GM12878 (cell line): ENCODE measurements at regions of chr1 and their contacts with region 1.

Region 1: DNA sequence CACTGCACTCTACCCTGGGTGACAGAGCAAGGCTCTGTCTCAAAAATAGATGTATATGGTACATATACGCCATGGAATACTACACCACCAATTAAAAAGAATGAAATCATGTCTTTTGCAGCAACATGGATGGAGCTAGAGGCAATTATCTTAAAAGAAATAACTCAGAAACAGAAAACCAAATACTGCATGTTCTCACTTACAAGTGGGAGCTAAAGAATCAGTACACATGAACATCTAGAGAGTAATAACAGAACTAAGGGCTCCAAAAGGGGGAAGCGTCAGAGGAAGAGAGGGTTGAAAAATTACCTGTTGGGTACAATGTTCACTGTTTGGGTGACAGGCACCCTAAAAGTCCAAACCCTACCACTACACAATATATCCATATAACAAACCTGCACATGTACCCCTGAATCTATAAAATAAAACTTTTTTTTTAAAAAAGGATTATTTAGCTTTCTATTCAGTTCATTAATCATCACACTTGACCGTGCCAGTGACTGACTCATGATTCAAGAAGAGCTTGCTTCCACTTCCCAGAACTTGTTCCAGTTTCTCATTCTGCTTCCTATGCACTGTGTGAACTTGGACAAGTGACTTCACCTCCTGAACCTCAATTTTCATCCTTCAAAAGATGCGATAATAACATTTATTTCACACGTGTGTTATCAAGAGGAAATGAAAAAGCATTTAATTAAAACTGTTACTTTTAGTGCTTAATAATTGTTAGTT is 109.6 kb downstream of the PLPP3 start:
- DNase-seq: no peak
- ATAC-seq: peak; percentile 58
- H3K4me3 ChIP-seq: no peak overlapping the region
- H3K27ac ChIP-seq: no peak overlapping the region
- H3K4me1 ChIP-seq: peaks cover 8% of the 10 kb centered on the region; the same call in 1 of the 2 replicates
- H3K27me3 ChIP-seq: no peaks in the 10 kb centered on the region
- CTCF ChIP-seq: no peak
- EP300 ChIP-seq: no peak
- POLR2A ChIP-seq: no peak
- RAD21 ChIP-seq: no peak

Region 2: GRCh38 chr1:56212143-56212542 is 257.7 kb before region 1 on chr1:
- CTCF ChIA-PET with region 1: no interaction called
- POLR2A ChIA-PET with region 1: no interaction called
- RAD21 ChIA-PET with region 1: no interaction called
- SMC1A ChIA-PET with region 1: no interaction called
- in situ Hi-C with region 1: no loop called
- intact Hi-C with region 1: no loop called
- DNase-seq: no peak
- ATAC-seq: no peak
- H3K4me3 ChIP-seq: no peak overlapping the region
- H3K27ac ChIP-seq: no peak overlapping the region
- H3K4me1 ChIP-seq: no peaks in the 10 kb centered on the region
- H3K27me3 ChIP-seq: no peaks in the 10 kb centered on the region
- CTCF ChIP-seq: no peak
- EP300 ChIP-seq: no peak
- POLR2A ChIP-seq: no peak
- RAD21 ChIP-seq: no peak

Region 3: GRCh38 chr1:56456436-56457101 is 13.2 kb before region 1 on chr1:
- CTCF ChIA-PET with region 1: interaction called, 10 read pairs
- POLR2A ChIA-PET with region 1: interaction called, 6 read pairs
- RAD21 ChIA-PET with region 1: interaction called, 21 read pairs
- SMC1A ChIA-PET with region 1: interaction called, 19 read pairs
- in situ Hi-C with region 1: no loop called
- intact Hi-C with region 1: no loop called
- DNase-seq: no peak
- ATAC-seq: no peak
- H3K4me3 ChIP-seq: no peak overlapping the region
- H3K27ac ChIP-seq: no peak overlapping the region
- H3K4me1 ChIP-seq: no peaks in the 10 kb centered on the region
- H3K27me3 ChIP-seq: no peaks in the 10 kb centered on the region
- CTCF ChIP-seq: no peak
- EP300 ChIP-seq: no peak
- POLR2A ChIP-seq: no peak
- RAD21 ChIP-seq: no peak